ENCODE measurements at regions of chr4 and their contacts with region 1.

Region 1: GRCh38 chr4:182642831-182643230 is 274.4 kb downstream of the DCTD start:
- DNase-seq: no peak
- H3K4me3 ChIP-seq: no peak overlapping the region
- H3K4me3 Mint-ChIP-seq: no peak overlapping the region
- H3K27ac Mint-ChIP-seq: no peak overlapping the region
- H3K4me1 ChIP-seq: no peaks in the 10 kb centered on the region
- H3K4me1 Mint-ChIP-seq: no peaks in the 10 kb centered on the region
- H3K27me3 ChIP-seq: no peaks in the 10 kb centered on the region
- H3K27me3 Mint-ChIP-seq: no peaks in the 10 kb centered on the region
- CTCF ChIP-seq: no peak

Region 2: DNA sequence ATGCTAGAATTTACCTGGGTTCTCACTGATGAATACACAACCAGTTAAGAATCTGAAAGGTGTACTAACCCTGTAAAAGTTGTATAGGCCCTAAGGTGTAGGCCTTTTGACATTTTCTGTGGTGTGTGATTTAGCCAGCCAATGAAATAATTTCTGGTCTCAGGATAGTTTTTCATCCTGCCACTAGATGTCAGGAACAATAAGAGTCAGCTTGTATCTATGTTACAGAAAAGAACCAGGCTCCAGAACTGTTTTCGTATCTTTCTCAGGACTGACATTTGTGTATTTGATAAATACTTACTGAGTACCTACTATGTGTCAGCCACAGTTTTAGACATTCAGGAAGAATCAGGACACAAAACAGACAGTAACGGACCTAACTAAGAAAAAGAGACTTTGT is 1073.3 kb before region 1 on chr4:
- CTCF ChIA-PET with region 1: interaction called, 11 read pairs
- POLR2A ChIA-PET with region 1: no interaction called
- intact Hi-C with region 1: no loop called
- DNase-seq: peak in 1 of 2 experiments; percentile 4
- H3K4me3 ChIP-seq: no peak overlapping the region
- H3K4me3 Mint-ChIP-seq: no peak overlapping the region
- H3K27ac Mint-ChIP-seq: no peak overlapping the region
- H3K4me1 ChIP-seq: no peaks in the 10 kb centered on the region
- H3K4me1 Mint-ChIP-seq: no peaks in the 10 kb centered on the region
- H3K27me3 ChIP-seq: no peaks in the 10 kb centered on the region
- H3K27me3 Mint-ChIP-seq: peaks cover 11% of the 10 kb centered on the region
- CTCF ChIP-seq: peak in 1 of 2 experiments; percentile 48

Measured in Caco-2 (cell line).